Heart right ventricle (tissue), 16 donors: ENCODE measurements at regions of chr7 and their contacts with region 1.

Region 1: DNA sequence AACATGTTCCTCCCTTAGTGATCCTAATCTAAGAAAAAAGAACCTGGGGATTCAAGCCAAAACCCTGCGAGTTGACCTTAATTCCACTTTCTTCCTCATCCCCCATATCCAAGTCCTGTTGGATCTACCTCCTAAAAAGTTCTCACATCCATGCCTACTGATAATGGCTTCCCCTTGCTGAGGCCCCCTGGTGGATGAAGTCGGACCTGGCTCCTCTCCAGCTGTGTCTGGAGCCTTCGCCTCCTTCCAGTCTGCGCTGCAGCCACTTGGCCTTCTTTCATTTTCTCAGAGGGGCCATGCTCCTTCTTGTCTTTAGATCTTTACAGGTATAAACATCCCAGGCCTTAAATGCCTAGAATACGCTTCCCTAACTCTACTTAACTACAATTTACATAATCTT is 8.1 kb downstream of the PDE1C start:
- DNase-seq: peak; percentile 37 to 51
- ATAC-seq: peak in 2 of 8 donors; percentile 12 to 26
- H3K4me3 ChIP-seq: no peak overlapping the region
- H3K27ac ChIP-seq: peak overlapping the region in 3 of 10 donors; percentile 33 to 76 (median 35)
- H3K4me1 ChIP-seq: peaks cover 5 to 90% (median 64%) of the 10 kb centered on the region in 9 donors
- H3K27me3 ChIP-seq: no peaks in the 10 kb centered on the region
- CTCF ChIP-seq: peak in 8 of 9 donors; percentile 9 to 57 (median 49)

Region 2: GRCh38 chr7:31051598-31052486 is 1010.3 kb before region 1 on chr7 and contains the start of gene ADCYAP1R1:
- intact Hi-C with region 1: no loop called
- DNase-seq: peak; percentile 39 to 59
- ATAC-seq: peak; percentile 29 to 88 (median 66)
- H3K4me3 ChIP-seq: peak within 1 kb of the TSS; percentile 37 to 63 (median 52)
- H3K27ac ChIP-seq: peak within 1 kb of the TSS in 3 of 10 donors; percentile 15 to 72 (median 26)
- H3K4me1 ChIP-seq: peaks cover 0 to 29% (median 7%) of the 10 kb centered on the region in 9 donors
- H3K27me3 ChIP-seq: peaks cover 0 to 52% (median 43%) of the 10 kb centered on the region in 7 donors
- CTCF ChIP-seq: peak in 3 of 9 donors; percentile 6 to 42 (median 18)
- total RNA-seq, gene ADCYAP1R1: 0.94 to 5.8 (median 1.8) TPM

Region 3: GRCh38 chr7:31782411-31782991 is 279.6 kb before region 1 on chr7:
- intact Hi-C with region 1: loop called in 1 of 10 experiments (anchors 10 kb)
- DNase-seq: no peak
- ATAC-seq: peak; percentile 51 to 69 (median 64)
- H3K4me3 ChIP-seq: no peak overlapping the region
- H3K27ac ChIP-seq: no peak overlapping the region
- H3K4me1 ChIP-seq: peaks cover 0 to 17% (median 3%) of the 10 kb centered on the region in 9 donors
- H3K27me3 ChIP-seq: no peaks in the 10 kb centered on the region
- CTCF ChIP-seq: peak; percentile 59 to 84 (median 77)

Region 4: DNA sequence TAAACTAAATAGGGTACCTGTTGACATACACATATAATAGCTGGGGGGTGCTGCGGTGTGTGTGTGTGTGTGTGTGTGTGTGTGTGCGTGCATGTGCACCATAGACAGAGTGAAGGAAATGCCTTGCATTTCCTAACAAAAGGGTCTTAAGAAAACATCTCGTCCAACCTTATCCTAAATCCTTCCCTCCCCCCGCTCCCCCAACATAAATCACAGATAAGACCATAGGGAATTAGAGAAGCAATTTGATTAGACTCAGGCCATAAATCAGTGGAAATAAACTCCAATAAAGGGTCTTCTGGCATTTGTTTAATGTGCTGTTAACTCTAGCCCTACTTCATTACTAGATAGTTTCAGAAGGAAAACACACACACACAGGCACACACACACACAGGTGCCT is 226.7 kb before region 1 on chr7:
- intact Hi-C with region 1: loop called in 1 of 10 experiments (anchors 10 kb)
- DNase-seq: no peak
- ATAC-seq: no peak
- H3K4me3 ChIP-seq: no peak overlapping the region
- H3K27ac ChIP-seq: no peak overlapping the region
- H3K4me1 ChIP-seq: peaks cover 0 to 11% (median 0%) of the 10 kb centered on the region in 9 donors
- H3K27me3 ChIP-seq: no peaks in the 10 kb centered on the region
- CTCF ChIP-seq: no peak

Region 5: GRCh38 chr7:31875424-31875823 is 186.7 kb before region 1 on chr7:
- intact Hi-C with region 1: loop called in 1 of 10 experiments (anchors 10 kb)
- DNase-seq: peak in 1 of 2 donors; percentile 64
- ATAC-seq: peak in 7 of 8 donors; percentile 49 to 87 (median 74)
- H3K4me3 ChIP-seq: no peak overlapping the region
- H3K27ac ChIP-seq: peak overlapping the region in 9 of 10 donors; percentile 46 to 85 (median 65)
- H3K4me1 ChIP-seq: peaks cover 0 to 39% (median 25%) of the 10 kb centered on the region in 9 donors
- H3K27me3 ChIP-seq: no peaks in the 10 kb centered on the region
- CTCF ChIP-seq: no peak